Right ventricle myocardium superior (tissue), 1 donor: ENCODE measurements at regions of chr1 and their contacts with region 1.

Region 1: GRCh38 chr1:203101915-203102634 is 16.3 kb upstream of the MYOG start:
- DNase-seq: no peak
- ATAC-seq: no peak

Region 2: GRCh38 chr1:203046984-203047630 is 55.0 kb before region 1 on chr1:
- intact Hi-C with region 1: loop called (anchors 5 kb)
- DNase-seq: no peak
- ATAC-seq: no peak